ENCODE measurements at regions of chr7 and their contacts with region 1.

Region 1: GRCh38 chr7:139284241-139284896 is 53.3 kb downstream of the UBN2 start:
- DNase-seq: peak in 1 of 35 experiments; percentile 5
- ATAC-seq: no peak
- H3K4me3 ChIP-seq: no peak overlapping the region
- H3K4me3 Mint-ChIP-seq: no peak overlapping the region
- H3K27ac ChIP-seq: no peak overlapping the region
- H3K27ac Mint-ChIP-seq: no peak overlapping the region
- H3K4me1 ChIP-seq: no peaks in the 10 kb centered on the region
- H3K4me1 Mint-ChIP-seq: no peaks in the 10 kb centered on the region
- H3K27me3 ChIP-seq: no peaks in the 10 kb centered on the region
- H3K27me3 Mint-ChIP-seq: no peaks in the 10 kb centered on the region

Region 2: DNA sequence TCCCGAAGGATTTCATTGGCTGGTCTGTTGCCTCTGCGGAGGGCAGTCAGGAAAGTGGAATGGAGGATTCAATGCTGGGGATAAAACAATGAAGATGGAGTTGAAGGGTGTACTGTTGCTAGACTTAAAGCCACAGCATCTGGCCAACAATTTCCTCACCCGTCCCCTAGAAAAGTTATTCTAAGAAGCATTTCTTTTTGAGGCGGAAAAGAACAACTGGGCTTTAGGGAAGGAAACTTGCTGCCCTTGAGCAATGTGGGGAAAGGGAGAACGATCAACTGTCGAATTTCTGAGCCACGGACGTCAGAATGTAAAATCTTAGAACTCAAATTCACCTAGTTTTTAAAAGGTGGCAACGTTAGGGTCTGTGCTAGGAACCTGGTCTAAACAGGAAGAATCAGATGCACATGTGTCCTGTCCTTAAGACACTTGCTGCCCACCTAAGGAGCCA is 57.4 kb after region 1 on chr7:
- CTCF ChIA-PET with region 1: no interaction called
- POLR2A ChIA-PET with region 1: interaction called in 1 of 2 experiments, 10 read pairs
- DNase-seq: no peak
- ATAC-seq: no peak
- H3K4me3 ChIP-seq: peak overlapping the region; percentile 81 to 96
- H3K4me3 Mint-ChIP-seq: peak overlapping the region; percentile 96 to 99 (median 96)
- H3K27ac ChIP-seq: peak overlapping the region; percentile 97
- H3K27ac Mint-ChIP-seq: peak overlapping the region; percentile 97
- H3K4me1 ChIP-seq: peaks cover 8 to 27% of the 10 kb centered on the region in 2 experiments
- H3K4me1 Mint-ChIP-seq: peaks cover 36 to 44% (median 40%) of the 10 kb centered on the region in 3 donors
- H3K27me3 ChIP-seq: no peaks in the 10 kb centered on the region
- H3K27me3 Mint-ChIP-seq: peaks cover 4 to 7% of the 10 kb centered on the region in 2 donors